Activated CD4-positive, alpha-beta T cell treated with anti-CD3 and anti-CD28 coated beads, Interleukin-2, amount 10 ng/mL, durations not matched to agents 24 days and 14 days (primary cell): ENCODE measurements at regions of chr3 and their contacts with region 1.

Region 1: DNA sequence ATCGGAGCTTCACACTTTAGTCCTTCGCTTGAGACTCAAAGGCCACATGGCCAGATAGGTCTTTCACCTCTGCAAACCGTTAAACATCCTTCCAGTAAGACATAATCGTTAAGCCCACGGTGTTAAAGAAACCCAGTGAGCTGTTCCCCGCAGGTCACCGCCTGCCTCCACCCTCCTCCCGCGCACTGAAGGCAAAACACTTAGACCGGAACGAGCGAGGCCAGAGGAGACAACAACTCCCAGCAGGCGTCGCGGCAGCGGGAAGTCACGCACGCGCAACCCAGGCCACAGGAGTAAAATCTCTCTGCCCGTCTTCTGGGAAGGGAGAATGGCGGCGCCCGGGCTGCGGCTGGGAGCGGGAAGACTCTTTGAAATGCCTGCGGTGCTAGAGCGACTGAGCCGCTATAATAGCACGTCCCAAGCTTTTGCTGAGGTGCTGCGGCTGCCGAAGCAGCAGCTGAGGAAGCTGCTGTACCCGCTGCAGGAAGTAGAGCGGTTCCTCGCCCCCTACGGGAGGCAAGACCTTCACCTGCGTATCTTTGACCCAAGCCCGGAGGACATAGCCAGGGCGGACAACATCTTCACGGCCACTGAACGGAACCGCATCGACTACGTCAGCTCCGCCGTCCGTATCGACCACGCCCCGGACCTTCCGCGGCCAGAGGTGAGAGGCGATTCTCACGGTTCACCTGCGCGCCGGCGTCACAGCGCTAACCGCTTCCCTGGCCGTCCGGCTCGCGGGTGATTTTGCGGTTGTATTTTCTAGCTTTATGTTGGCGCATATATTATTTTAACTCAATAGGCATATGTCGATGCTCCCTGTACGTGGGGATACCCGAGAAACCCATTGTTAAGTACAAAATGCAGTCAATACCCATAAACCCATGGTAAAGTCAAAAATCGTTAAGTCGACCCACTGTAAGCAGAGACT is at the start of gene GTPBP8:
- DNase-seq: peak; percentile 95
- H3K4me3 Mint-ChIP-seq: peak within 1 kb of the TSS; percentile 88
- H3K27ac Mint-ChIP-seq: peak within 1 kb of the TSS; percentile 97
- H3K4me1 Mint-ChIP-seq: peaks cover 56% of the 10 kb centered on the region
- H3K27me3 Mint-ChIP-seq: no peaks in the 10 kb centered on the region
- total RNA-seq, gene GTPBP8: 18.4 and 18.9 TPM in 2 replicates

Region 2: DNA sequence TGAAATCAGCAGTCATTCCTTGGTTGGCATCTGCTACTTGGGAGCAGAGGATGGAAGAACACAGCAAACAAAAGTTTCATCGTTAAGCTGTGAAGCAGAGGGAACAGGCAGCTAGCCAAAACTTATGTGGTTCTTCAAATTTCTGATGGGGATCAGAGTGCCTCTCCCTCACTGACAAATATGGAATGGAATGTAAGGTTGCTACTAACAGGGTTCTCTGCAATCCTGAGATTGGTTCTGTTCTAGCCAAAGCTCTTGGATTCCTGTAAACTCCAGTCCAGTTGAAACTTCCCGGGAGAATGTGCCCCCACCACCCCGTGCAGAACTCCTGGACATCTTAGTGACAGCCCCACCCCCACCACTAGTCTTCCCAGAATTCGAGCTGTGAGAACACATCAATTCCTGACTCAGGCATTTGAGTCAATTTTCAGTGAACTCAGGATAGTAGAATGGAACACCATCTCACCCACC is 1187.8 kb before region 1 on chr3:
- intact Hi-C with region 1: no loop called
- DNase-seq: no peak
- H3K4me3 Mint-ChIP-seq: no peak overlapping the region
- H3K27ac Mint-ChIP-seq: no peak overlapping the region
- H3K4me1 Mint-ChIP-seq: no peaks in the 10 kb centered on the region
- H3K27me3 Mint-ChIP-seq: peaks cover 3% of the 10 kb centered on the region

Region 3: DNA sequence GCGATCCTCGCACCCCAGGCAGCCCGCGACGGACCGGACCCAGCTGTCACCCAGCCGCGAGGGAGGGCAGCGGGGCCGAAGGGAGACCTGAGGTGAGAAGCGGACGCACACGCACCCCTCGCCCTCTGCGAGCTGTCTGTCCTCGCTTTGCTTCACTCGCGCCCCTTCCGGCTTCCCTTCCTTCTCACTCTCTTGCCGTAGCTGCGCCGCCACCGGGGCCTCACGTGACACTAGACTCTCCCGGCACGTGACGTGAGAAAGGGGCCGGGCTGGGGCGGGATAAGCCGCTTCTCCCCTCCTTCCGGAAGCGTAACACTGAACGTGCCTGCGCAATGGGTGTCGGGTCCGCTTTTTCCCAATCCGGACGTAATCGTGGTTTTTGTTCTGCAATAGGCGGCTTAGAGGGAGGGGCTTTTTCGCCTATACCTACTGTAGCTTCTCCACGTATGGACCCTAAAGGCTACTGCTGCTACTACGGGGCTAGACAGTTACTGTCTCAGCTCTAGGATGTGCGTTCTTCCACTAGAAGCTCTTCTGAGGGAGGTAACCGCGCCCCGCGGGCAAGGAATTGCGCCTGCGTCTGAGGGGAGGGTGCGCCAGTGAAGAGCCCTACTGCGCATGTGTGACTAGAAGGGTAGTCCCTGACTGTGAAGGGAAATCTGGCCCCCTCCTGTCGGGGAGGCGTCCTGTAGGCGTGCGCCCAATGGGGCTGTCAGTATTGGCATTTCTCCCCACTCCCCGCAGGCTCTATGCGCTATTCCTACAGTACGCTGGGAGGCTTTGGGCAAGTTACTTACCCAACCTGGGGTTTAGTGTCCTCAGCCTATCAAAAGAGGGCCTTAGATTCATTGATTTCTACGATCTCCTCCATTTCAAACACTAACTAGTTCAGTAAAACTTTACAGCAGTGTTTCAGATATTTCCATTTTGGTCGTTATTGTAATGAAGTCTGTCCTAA is 428.9 kb before region 1 on chr3 and contains the starts of genes ATG3 and SLC35A5:
- intact Hi-C with region 1: loop called (anchors 2 kb)
- DNase-seq: peak; percentile 100
- H3K4me3 Mint-ChIP-seq: peak within 1 kb of the TSS; percentile 98
- H3K27ac Mint-ChIP-seq: peak within 1 kb of the TSS; percentile 99
- H3K4me1 Mint-ChIP-seq: peaks cover 24% of the 10 kb centered on the region
- H3K27me3 Mint-ChIP-seq: no peaks in the 10 kb centered on the region
- total RNA-seq, gene ATG3: 66.9 and 69.1 TPM in 2 replicates
- total RNA-seq, gene SLC35A5: 15.5 and 16.3 TPM in 2 replicates

Region 4: DNA sequence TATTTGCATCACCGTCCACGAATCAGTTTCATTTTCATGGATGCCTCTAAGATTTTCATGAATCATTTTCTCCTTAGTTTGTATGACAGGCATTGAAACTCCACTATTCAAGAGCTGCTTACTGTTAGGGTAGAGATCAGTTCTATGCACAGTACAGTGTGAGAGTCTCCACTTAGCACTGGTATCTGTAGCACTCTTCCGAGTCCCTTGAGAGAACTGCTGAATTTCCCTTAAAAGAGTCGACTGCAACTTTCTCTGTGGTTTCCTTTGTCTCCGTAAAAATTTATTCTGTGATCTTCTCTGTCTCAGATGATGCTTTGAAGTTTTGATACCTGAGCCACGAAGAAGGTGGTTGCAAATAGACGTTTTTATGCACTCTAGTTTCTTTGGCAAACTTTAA is 14.7 kb after region 1 on chr3:
- intact Hi-C with region 1: loop called (anchors 1 kb)
- DNase-seq: peak; percentile 77
- H3K4me3 Mint-ChIP-seq: peak overlapping the region; percentile 77
- H3K27ac Mint-ChIP-seq: peak overlapping the region; percentile 88
- H3K4me1 Mint-ChIP-seq: peaks cover 56% of the 10 kb centered on the region
- H3K27me3 Mint-ChIP-seq: no peaks in the 10 kb centered on the region

Region 5: GRCh38 chr3:113696658-113697499 is 705.9 kb after region 1 on chr3:
- intact Hi-C with region 1: no loop called
- DNase-seq: peak; percentile 100
- H3K4me3 Mint-ChIP-seq: no peak overlapping the region
- H3K27ac Mint-ChIP-seq: no peak overlapping the region
- H3K4me1 Mint-ChIP-seq: peaks cover 27% of the 10 kb centered on the region
- H3K27me3 Mint-ChIP-seq: no peaks in the 10 kb centered on the region

Region 6: DNA sequence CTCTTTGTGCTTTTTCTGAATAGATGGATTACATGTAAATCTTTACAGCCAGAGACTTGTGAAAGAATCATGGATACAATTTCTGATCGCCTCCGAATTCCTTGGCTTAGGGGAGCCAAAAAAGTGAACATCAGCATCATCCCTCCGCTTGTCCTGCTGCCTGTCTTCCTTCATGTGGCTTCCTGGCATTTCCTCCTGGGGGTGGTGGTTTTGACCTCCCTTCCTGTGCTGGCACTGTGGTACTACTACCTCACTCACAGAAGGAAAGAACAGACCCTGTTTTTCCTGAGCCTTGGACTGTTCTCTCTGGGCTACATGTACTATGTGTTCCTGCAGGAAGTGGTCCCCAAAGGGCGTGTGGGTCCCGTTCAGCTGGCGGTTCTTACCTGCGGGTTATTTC is 962.7 kb after region 1 on chr3:
- intact Hi-C with region 1: no loop called
- DNase-seq: no peak
- H3K4me3 Mint-ChIP-seq: no peak overlapping the region
- H3K27ac Mint-ChIP-seq: no peak overlapping the region
- H3K4me1 Mint-ChIP-seq: peaks cover 13% of the 10 kb centered on the region
- H3K27me3 Mint-ChIP-seq: peaks cover 24% of the 10 kb centered on the region